Right ventricle myocardium inferior (tissue), 1 donor: ENCODE measurements at regions of chr17 and their contacts with region 1.

Region 1: GRCh38 chr17:38351412-38352222 is at the start of gene SOCS7:
- DNase-seq: peak; percentile 96
- ATAC-seq: peak; percentile 98
- total RNA-seq, gene SOCS7: 12.0 TPM

Region 2: GRCh38 chr17:38415250-38416194 is 63.9 kb after region 1 on chr17:
- intact Hi-C with region 1: loop called (anchors 1 kb)
- DNase-seq: no peak
- ATAC-seq: no peak

Region 3: DNA sequence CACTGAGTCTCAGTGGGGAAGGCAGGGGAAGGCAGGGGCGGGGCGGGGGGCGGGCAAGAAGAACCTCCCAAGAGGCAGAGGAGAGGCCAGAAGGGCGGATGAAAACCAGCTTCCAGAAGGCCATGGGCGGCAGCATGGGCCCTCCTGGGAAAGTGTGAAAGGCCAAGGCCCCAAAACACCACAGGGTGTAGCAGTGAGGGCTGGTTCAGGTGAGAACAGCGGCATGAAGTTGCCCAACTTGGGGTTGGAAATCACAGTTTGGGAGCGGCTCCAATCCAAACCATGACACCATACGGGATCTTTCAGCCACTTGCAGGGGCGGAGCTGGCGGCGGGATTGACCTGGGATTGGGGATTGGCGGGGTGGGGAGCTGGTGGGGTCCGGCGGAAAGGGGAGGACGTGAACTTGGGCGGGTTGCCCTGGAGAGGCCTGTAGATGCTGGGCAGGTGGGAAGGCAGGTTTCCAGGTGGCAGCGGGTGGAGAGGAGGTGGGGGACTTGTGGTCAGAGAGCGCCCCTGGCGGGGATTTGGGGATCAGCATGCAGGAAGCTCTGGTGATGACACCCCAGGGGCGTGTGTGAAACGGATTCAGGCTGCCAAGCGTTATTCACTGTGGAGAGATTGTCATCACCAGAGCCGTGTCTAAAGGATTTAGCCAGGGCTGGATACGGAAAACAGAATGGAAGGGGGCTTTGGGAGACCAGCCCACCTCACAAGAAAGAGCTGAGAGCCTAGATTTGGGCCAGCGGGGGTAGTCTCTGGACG is 157.6 kb after region 1 on chr17:
- intact Hi-C with region 1: loop called (anchors 10 kb)
- DNase-seq: peak; percentile 89
- ATAC-seq: peak; percentile 51

Region 4: GRCh38 chr17:38729886-38730525 is 378.4 kb after region 1 on chr17 and contains the start of gene CISD3:
- intact Hi-C with region 1: no loop called
- DNase-seq: peak; percentile 95
- ATAC-seq: peak; percentile 90
- total RNA-seq, gene CISD3: 84.7 TPM